ENCODE measurements at regions of chr4 and their contacts with region 1.

Region 1: DNA sequence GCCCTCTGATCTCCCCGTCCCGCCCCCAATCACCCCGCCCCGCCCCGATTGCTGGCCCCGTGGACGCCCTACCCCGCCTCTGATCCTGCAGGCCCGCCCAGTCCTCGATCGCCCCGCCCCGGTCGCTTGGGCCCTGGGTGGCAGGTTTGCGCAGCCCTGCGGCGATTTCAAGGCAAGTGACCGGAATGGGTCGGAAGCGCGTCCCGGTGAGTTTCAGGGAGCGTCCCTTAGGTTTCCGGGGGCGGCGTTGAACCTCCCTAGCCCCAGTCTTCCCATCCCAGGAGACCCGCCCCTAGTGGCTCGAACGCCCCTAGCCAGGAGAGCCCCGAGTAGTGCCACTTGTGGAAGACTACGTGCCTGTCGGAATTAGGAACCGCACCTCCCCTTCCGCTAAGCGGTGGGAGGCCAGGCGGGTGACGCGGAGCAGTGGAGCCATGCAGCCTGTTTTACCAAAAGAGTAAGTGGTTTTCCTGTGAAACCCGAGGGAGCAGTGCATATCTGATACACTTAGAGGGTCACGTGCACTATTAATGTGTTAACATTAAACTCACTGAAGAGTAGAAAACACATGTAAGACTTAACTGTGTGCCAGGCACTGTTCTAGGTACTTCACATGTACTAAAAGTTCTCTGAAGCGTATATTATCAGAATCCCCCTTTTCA is 354 bp upstream of the TEC start:
- DNase-seq: peak; percentile 79
- H3K4me3 ChIP-seq: peak overlapping the region; percentile 80
- H3K27ac ChIP-seq: no peak overlapping the region
- H3K4me1 ChIP-seq: peaks cover 14% of the 10 kb centered on the region
- CTCF ChIP-seq: peak; percentile 42

Region 2: GRCh38 chr4:47809654-47810203 is 460.3 kb before region 1 on chr4:
- CTCF ChIA-PET with region 1: no interaction called
- POLR2A ChIA-PET with region 1: no interaction called
- intact Hi-C with region 1: no loop called
- DNase-seq: no peak
- H3K4me3 ChIP-seq: no peak overlapping the region
- H3K27ac ChIP-seq: no peak overlapping the region
- H3K4me1 ChIP-seq: no peaks in the 10 kb centered on the region
- CTCF ChIP-seq: no peak

Region 3: GRCh38 chr4:47914220-47914925 is 355.6 kb before region 1 on chr4 and contains the start of gene NFXL1:
- CTCF ChIA-PET with region 1: no interaction called
- POLR2A ChIA-PET with region 1: no interaction called
- intact Hi-C with region 1: loop called (anchors 10 kb)
- DNase-seq: peak; percentile 97
- H3K4me3 ChIP-seq: peak within 1 kb of the TSS; percentile 98
- H3K27ac ChIP-seq: peak within 1 kb of the TSS; percentile 54
- H3K4me1 ChIP-seq: peaks cover 33% of the 10 kb centered on the region
- CTCF ChIP-seq: no peak
- total RNA-seq, gene NFXL1: 17.7 and 17.9 TPM in 2 replicates

Region 4: GRCh38 chr4:48016141-48017103 is 253.6 kb before region 1 on chr4 and contains the starts of genes CNGA1 and NIPAL1:
- CTCF ChIA-PET with region 1: no interaction called
- POLR2A ChIA-PET with region 1: no interaction called
- intact Hi-C with region 1: loop called (anchors 5 kb)
- DNase-seq: peak; percentile 77
- H3K4me3 ChIP-seq: peak within 1 kb of the TSS; percentile 73
- H3K27ac ChIP-seq: no peak within 1 kb of the TSS
- H3K4me1 ChIP-seq: peaks cover 9% of the 10 kb centered on the region
- CTCF ChIP-seq: peak; percentile 81
- total RNA-seq, gene CNGA1: not detected in 2 replicates
- total RNA-seq, gene NIPAL1: 0.28 and 1.1 TPM in 2 replicates

Region 5: GRCh38 chr4:48047421-48047844 is 222.6 kb before region 1 on chr4:
- CTCF ChIA-PET with region 1: no interaction called
- POLR2A ChIA-PET with region 1: no interaction called
- intact Hi-C with region 1: loop called (anchors 2 kb)
- DNase-seq: peak; percentile 90
- H3K4me3 ChIP-seq: peak overlapping the region; percentile 43
- H3K27ac ChIP-seq: peak overlapping the region; percentile 85
- H3K4me1 ChIP-seq: peaks cover 76% of the 10 kb centered on the region
- CTCF ChIP-seq: no peak

Region 6: DNA sequence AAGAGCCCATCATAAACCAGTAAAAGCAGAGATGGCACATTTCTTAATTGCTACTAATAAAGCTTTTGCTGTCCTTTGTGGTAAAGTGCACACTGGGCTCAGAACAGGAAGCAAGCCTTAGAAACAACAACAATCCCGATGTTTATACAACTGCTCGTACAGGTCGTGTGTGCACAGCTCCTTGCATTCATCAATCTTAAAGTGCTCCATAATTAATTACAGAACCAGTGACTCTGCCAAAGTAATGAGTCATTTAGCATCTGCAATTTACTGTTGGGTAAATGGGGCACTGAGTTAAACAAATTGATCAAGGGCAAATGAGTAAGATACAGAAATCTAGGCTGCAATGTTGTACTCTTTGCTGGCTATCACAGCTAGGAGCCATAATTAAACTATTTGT is 74.6 kb before region 1 on chr4:
- CTCF ChIA-PET with region 1: no interaction called
- POLR2A ChIA-PET with region 1: interaction called, 4 read pairs
- intact Hi-C with region 1: loop called (anchors 5 kb)
- DNase-seq: no peak
- H3K4me3 ChIP-seq: peak overlapping the region; percentile 37
- H3K27ac ChIP-seq: peak overlapping the region; percentile 61
- H3K4me1 ChIP-seq: peaks cover 66% of the 10 kb centered on the region
- CTCF ChIP-seq: no peak

Region 7: DNA sequence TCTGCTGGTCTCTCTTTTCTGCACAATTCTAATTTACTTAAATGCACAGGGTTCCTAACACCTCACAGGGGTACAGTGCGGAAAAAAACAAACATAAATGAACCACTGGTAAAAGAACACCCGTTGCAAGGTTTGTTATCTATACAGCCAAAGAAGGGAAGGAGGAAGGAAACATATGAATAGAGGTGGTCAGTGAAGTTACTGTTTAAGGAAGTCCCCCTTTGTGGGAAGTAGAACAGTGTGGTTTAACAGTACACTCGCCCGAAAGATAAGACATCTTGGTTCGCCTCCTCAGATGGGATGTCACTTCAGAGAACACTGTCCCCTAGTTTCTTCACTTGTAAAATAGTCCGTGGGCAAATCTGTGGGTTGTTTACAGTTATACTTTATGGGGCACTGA is 57.8 kb before region 1 on chr4:
- CTCF ChIA-PET with region 1: no interaction called
- POLR2A ChIA-PET with region 1: interaction called, 4 read pairs
- intact Hi-C with region 1: loop called (anchors 5 kb)
- DNase-seq: no peak
- H3K4me3 ChIP-seq: no peak overlapping the region
- H3K27ac ChIP-seq: peak overlapping the region; percentile 12
- H3K4me1 ChIP-seq: peaks cover 20% of the 10 kb centered on the region
- CTCF ChIP-seq: no peak

Region 8: GRCh38 chr4:48470570-48470969 is 200.6 kb after region 1 on chr4:
- CTCF ChIA-PET with region 1: no interaction called
- POLR2A ChIA-PET with region 1: no interaction called
- intact Hi-C with region 1: no loop called
- DNase-seq: no peak
- H3K4me3 ChIP-seq: no peak overlapping the region
- H3K27ac ChIP-seq: no peak overlapping the region
- H3K4me1 ChIP-seq: no peaks in the 10 kb centered on the region
- CTCF ChIP-seq: no peak